ENCODE measurements at regions of chr9 and their contacts with region 1.

Region 1: GRCh38 chr9:137417161-137418021 is 5.6 kb downstream of the EXD3 start:
- DNase-seq: no peak
- H3K4me3 ChIP-seq: peak overlapping the region; percentile 7
- CTCF ChIP-seq: no peak

Region 2: GRCh38 chr9:137311171-137311985 is 106.0 kb before region 1 on chr9:
- in situ Hi-C with region 1: loop called (anchors 5 kb)
- DNase-seq: no peak
- H3K4me3 ChIP-seq: no peak overlapping the region
- CTCF ChIP-seq: no peak

Region 3: DNA sequence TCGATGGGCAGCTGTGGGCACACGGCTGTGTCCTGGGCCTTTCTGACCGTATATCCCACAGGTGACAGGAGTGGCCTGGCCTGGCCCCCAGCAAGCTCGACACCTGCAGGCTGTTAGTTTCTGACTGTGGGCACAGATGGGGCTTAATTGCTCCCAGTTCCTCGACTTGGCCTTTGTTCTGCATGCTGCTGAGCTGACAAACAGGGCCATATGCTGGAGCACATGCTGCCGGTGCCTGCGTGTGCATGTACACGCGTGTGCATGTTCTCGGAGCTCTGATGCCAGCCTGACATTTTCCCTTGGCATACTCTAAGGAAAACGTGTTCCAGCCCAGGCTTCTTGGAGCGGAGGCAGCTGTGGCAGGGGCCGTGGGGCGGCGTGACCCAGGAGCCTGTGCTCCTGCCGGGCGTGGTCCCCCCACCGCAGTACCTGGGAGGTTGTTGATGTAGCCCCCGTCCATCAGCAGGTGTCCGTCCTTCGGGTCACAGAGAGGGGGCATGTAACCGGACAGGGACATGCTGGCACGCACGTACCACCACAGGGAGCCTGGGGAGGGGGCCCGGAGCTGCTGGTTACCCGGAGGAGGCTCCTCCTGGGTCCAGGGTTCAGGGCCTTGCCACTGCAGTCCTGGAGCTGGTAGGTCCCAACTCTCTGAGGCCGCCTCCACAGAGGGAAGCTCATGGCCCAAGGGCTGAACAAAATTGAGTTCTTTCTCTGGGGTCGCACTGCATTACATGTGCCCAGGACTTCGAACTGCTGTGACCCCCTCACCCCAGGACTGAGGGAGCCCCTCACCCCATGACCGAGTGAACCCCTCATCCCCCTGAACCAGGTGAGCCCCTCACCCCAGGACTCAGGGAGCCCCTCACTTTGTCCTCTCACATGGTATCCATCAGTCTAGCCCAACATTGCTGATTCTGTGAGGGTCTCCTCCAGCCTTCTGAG is 45.9 kb after region 1 on chr9:
- in situ Hi-C with region 1: no loop called
- DNase-seq: no peak
- H3K4me3 ChIP-seq: no peak overlapping the region
- CTCF ChIP-seq: no peak

Measured in astrocyte of the cerebellum (primary cell).